H1 (cell line): ENCODE measurements at regions of chr6 and their contacts with region 1.

Region 1: DNA sequence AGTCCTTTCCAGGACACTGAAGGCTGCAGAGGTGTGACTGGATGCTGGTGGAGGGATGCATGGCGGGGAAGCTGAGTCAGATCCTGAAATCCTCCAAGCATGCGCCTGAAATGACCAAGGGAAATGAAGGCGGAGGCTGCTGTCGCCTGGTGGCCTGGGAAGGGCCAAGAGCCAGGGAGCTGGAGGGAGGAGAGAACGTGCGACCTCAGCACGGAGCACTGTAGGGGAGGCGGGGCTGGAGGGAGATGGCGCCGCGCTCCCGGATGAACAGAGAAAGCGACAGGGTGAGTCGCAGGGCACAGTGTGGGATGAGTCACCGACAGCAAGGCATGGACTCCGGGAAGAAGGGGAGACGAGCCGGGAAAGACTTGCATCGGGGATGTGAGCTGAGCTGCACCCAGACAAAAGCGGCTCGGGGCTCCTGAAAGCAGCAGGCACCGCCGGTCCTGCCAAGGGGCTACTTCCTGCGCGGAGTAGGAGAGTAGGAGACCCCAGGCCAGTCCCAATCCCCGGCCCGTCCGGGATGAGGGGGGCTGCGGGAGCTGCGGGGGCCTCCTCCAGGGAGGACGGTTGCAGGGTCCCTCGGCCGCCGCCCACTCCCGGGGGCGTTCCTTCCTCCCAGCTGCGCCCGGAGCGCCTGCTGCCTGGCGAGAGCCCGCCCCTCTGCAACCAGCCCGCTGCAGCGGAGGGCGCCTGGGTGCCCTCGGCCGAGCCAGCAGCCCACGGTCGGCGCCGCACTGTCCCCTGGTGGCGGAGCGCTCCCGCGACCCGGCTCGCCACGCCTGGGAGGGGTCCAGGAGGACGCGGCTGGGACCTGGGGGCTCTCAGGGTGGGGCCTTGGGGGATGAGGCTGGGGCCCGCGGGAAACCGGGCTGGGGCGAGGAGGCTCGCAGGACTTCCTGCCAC is 11.0 kb upstream of the NQO2 start:
- DNase-seq: peak; percentile 84 to 92
- H3K4me3 ChIP-seq: peak overlapping the region; percentile 52 to 70 (median 62)
- H3K27ac ChIP-seq: peak overlapping the region; percentile 99
- H3K4me1 ChIP-seq: peaks cover 8 to 26% (median 16%) of the 10 kb centered on the region in 4 experiments
- H3K27me3 ChIP-seq: no peaks in the 10 kb centered on the region
- CTCF ChIP-seq: peak; percentile 80 to 87 (median 82)
- EP300 ChIP-seq: peak in 1 of 2 experiments; percentile 2; a peak in 1 of 3 replicates
- POLR2A ChIP-seq: peak; percentile 68 to 94
- RAD21 ChIP-seq: peak; percentile 65 to 85

Region 2: DNA sequence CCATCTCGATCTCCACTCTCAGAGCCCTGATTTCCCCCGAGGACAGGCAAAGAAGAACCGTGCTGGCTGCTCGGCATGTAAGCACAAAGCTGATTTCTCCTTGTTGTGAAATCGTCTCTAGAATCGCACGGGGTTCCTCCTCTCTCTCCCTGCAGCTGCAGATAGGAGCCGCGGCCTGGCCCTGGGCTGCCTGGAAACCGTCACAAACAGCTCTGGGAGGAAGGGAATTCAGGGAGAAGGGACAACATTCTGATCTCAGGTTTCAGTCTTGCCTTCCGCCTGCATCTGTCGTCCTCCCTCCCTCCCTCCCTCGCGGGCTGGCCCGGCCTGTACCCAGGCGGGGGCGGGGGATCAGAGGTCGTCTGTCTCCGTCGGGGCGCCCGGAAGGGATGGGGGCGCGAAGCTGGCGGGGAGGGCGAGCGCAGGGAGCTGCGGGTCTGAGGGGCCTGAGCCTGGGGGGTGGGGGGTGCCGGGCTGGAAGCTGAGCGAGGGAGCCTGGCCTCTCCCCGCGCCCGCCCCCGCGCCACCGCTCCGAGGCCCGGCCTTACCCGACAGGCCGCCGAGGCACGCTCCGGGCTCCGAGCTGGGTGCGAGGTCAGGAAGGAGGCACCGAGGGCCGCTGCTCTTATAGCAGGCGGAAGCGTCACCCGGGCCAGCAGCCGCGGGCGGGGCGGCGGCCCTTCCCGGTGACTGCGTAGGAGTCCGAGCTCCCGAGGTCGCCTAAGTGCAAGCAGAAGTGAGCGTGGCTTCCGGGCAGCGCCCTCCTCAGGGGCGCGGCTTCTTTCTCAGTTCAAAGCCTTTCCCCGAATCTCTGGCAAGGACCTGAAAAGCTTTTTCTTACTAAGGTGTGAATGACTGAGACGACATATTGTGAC is 147.2 kb before region 1 on chr6 and contains the start of gene SERPINB1:
- CTCF ChIA-PET with region 1: interaction called, 39 read pairs
- POLR2A ChIA-PET with region 1: interaction called, 15 read pairs
- DNase-seq: peak; percentile 69 to 83
- H3K4me3 ChIP-seq: peak within 1 kb of the TSS; percentile 21 to 62 (median 53)
- H3K27ac ChIP-seq: peak within 1 kb of the TSS; percentile 87
- H3K4me1 ChIP-seq: peaks cover 8 to 17% (median 10%) of the 10 kb centered on the region in 4 experiments
- H3K27me3 ChIP-seq: no peaks in the 10 kb centered on the region
- CTCF ChIP-seq: peak in 2 of 3 experiments; percentile 5 to 17; a peak in 2 of 4 replicates
- EP300 ChIP-seq: peak in 1 of 2 experiments; percentile 34; a peak in 1 of 3 replicates
- POLR2A ChIP-seq: peak; percentile 59 to 79
- RAD21 ChIP-seq: peak in 1 of 2 experiments; percentile 19; a peak in 1 of 4 replicates
- total RNA-seq, gene SERPINB1: 17.3 and 20.0 TPM in 2 replicates

Region 3: GRCh38 chr6:2940010-2940850 is 48.4 kb before region 1 on chr6:
- CTCF ChIA-PET with region 1: interaction called, 35 read pairs
- POLR2A ChIA-PET with region 1: interaction called, 3 read pairs
- DNase-seq: peak in 1 of 2 experiments; percentile 33
- H3K4me3 ChIP-seq: no peak overlapping the region
- H3K27ac ChIP-seq: no peak overlapping the region
- H3K4me1 ChIP-seq: no peaks in the 10 kb centered on the region; a peak in 2 of 7 replicates
- H3K27me3 ChIP-seq: no peaks in the 10 kb centered on the region; a peak in 1 of 7 replicates
- CTCF ChIP-seq: no peak
- EP300 ChIP-seq: no peak
- POLR2A ChIP-seq: no peak
- RAD21 ChIP-seq: no peak

Region 4: DNA sequence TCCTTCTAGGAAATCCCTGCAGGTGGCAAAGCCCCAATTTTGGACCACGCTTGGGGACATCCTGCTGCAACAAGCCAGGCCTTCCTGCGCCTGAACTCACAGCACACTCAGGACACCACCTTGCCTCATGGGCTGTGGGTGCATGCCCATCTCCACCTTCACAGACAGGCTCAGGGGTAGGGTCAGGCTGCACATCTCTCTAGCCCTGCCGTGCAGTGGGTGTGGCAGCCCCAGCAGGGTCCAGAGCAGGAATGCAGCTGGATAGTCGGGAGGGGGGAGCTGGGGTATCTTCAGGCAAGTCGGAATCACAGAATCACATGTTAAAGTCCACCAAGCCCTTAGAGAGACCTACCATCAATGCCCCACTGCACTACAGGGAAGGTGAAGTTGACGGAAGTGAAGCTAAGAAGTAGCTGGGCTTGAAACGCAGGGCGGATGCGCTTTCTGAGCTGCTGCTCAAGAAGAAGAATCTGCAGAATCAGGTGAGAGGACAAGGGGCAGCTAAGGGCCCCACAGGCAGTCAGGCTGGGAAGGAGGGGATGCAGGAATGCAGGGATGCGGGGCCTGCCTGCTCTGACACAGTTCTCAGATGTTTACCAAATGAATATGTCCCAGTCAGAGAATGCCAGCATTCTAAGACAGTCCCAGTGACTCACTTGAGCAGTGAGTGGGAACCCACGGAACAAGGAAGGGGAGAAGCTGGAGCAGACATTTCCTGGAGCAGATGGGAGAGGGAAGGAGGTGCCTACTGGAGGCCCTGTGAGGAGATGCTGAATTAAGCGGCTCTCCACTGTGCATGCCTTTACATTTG is 28.6 kb before region 1 on chr6:
- CTCF ChIA-PET with region 1: interaction called, 142 read pairs
- POLR2A ChIA-PET with region 1: interaction called, 10 read pairs
- DNase-seq: no peak
- H3K4me3 ChIP-seq: peak overlapping the region in 1 of 4 experiments; percentile 0; a peak in 1 of 8 replicates
- H3K27ac ChIP-seq: no peak overlapping the region
- H3K4me1 ChIP-seq: peaks cover 16 to 23% (median 18%) of the 10 kb centered on the region in 4 experiments
- H3K27me3 ChIP-seq: no peaks in the 10 kb centered on the region
- CTCF ChIP-seq: no peak
- EP300 ChIP-seq: no peak
- POLR2A ChIP-seq: no peak
- RAD21 ChIP-seq: no peak

Region 5: GRCh38 chr6:2999618-3000557 is 11.2 kb after region 1 on chr6 and contains the start of gene NQO2:
- CTCF ChIA-PET with region 1: interaction called, 17 read pairs
- POLR2A ChIA-PET with region 1: interaction called, 47 read pairs
- DNase-seq: peak in 1 of 2 experiments; percentile 96
- H3K4me3 ChIP-seq: peak within 1 kb of the TSS; percentile 75 to 91 (median 88)
- H3K27ac ChIP-seq: 0 out of 2 replicates have a peak within 1 kb of the TSS, but pooled peaks have one; percentile 51
- H3K4me1 ChIP-seq: peaks cover 0 to 9% (median 1%) of the 10 kb centered on the region in 4 experiments; a peak in 4 of 7 replicates
- H3K27me3 ChIP-seq: no peaks in the 10 kb centered on the region
- CTCF ChIP-seq: no peak
- EP300 ChIP-seq: no peak
- POLR2A ChIP-seq: peak; percentile 70 to 91
- RAD21 ChIP-seq: no peak
- total RNA-seq, gene NQO2: 126 and 135 TPM in 2 replicates